Gastrocnemius medialis (tissue), 4 donors: ENCODE measurements at regions of chr4 and their contacts with region 1.

Region 1: DNA sequence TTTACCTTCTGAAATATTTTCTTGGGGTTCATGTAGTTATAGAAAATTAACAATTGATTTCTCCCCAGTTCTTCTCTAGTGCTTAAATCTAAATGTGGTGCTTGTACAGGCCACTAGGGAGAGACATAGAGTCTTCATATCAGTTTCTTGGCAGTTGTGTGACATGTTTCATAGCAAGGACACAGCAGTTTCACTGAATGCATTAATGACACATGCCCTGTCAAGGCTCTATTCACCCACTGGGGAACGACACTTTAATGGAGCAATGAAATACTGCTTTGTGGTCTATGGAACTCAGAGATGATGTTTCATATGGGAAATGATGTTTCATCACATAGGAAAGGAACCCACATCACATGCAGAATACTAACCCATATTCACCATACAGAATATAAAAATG is 2.8 kb downstream of the VEGFC start:
- DNase-seq: no peak
- ATAC-seq: peak; percentile 21 to 62
- H3K4me3 ChIP-seq: no peak overlapping the region
- H3K27ac ChIP-seq: peak overlapping the region in 1 of 4 donors; percentile 2
- H3K4me1 ChIP-seq: peaks cover 5 to 7% of the 10 kb centered on the region in 2 donors
- H3K27me3 ChIP-seq: no peaks in the 10 kb centered on the region
- CTCF ChIP-seq: peak in 4 of 5 experiments; percentile 39 to 53 (median 51)
- POLR2A ChIP-seq: no peak

Region 2: GRCh38 chr4:176377780-176378179 is 412.2 kb before region 1 on chr4:
- in situ Hi-C with region 1: no loop called
- intact Hi-C with region 1: loop called (anchors 10 kb)
- DNase-seq: no peak
- ATAC-seq: no peak
- H3K4me3 ChIP-seq: no peak overlapping the region
- H3K27ac ChIP-seq: no peak overlapping the region
- H3K4me1 ChIP-seq: no peaks in the 10 kb centered on the region
- H3K27me3 ChIP-seq: no peaks in the 10 kb centered on the region
- CTCF ChIP-seq: peak in 4 of 5 experiments; percentile 18 to 30 (median 24)
- POLR2A ChIP-seq: no peak

Region 3: GRCh38 chr4:176575141-176575730 is 214.7 kb before region 1 on chr4:
- in situ Hi-C with region 1: no loop called
- intact Hi-C with region 1: loop called (anchors 10 kb)
- DNase-seq: no peak
- ATAC-seq: no peak
- H3K4me3 ChIP-seq: no peak overlapping the region
- H3K27ac ChIP-seq: no peak overlapping the region
- H3K4me1 ChIP-seq: no peaks in the 10 kb centered on the region
- H3K27me3 ChIP-seq: no peaks in the 10 kb centered on the region
- CTCF ChIP-seq: no peak
- POLR2A ChIP-seq: no peak